ENCODE measurements at regions of chr11 and their contacts with region 1.

Region 1: GRCh38 chr11:22666688-22667439 is 453 bp downstream of the GAS2 start:
- DNase-seq: peak; percentile 52
- ATAC-seq: peak; percentile 79
- H3K4me3 Mint-ChIP-seq: peak overlapping the region; percentile 66
- H3K27ac Mint-ChIP-seq: peak overlapping the region; percentile 29
- H3K4me1 Mint-ChIP-seq: peaks cover 21% of the 10 kb centered on the region
- H3K27me3 Mint-ChIP-seq: peaks cover 42% of the 10 kb centered on the region

Region 2: GRCh38 chr11:22337596-22338485 is 329.0 kb before region 1 on chr11 and contains the start of gene SLC17A6:
- CTCF ChIA-PET with region 1: no interaction called
- POLR2A ChIA-PET with region 1: no interaction called
- intact Hi-C with region 1: loop called in 1 of 2 experiments (anchors 10 kb)
- DNase-seq: peak; percentile 40
- ATAC-seq: peak; percentile 42
- H3K4me3 Mint-ChIP-seq: no peak within 1 kb of the TSS
- H3K27ac Mint-ChIP-seq: no peak within 1 kb of the TSS
- H3K4me1 Mint-ChIP-seq: peaks cover 14% of the 10 kb centered on the region
- H3K27me3 Mint-ChIP-seq: peaks cover 59% of the 10 kb centered on the region
- total RNA-seq, gene SLC17A6: not detected

Measured in activated CD4-positive, alpha-beta T cell treated with anti-CD3 and anti-CD28 coated beads for 36 hours (primary cell).